Activated CD8-positive, alpha-beta T cell treated with anti-CD3 and anti-CD28 coated beads for 36 hours (primary cell): ENCODE measurements at regions of chr2 and their contacts with region 1.

Region 1: GRCh38 chr2:152717228-152718075 is at the start of gene PRPF40A:
- DNase-seq: peak; percentile 99
- ATAC-seq: peak; percentile 83
- H3K4me3 Mint-ChIP-seq: peak within 1 kb of the TSS; percentile 100
- H3K27ac Mint-ChIP-seq: peak within 1 kb of the TSS; percentile 99
- H3K4me1 Mint-ChIP-seq: peaks cover 49% of the 10 kb centered on the region
- H3K27me3 Mint-ChIP-seq: no peaks in the 10 kb centered on the region
- CTCF ChIP-seq: no peak
- total RNA-seq, gene PRPF40A: 145 to 148 TPM

Region 2: GRCh38 chr2:152694161-152694661 is 23.2 kb before region 1 on chr2:
- CTCF ChIA-PET with region 1: interaction called, 12 read pairs
- POLR2A ChIA-PET with region 1: interaction called, 12 read pairs
- intact Hi-C with region 1: no loop called
- DNase-seq: peak; percentile 74
- ATAC-seq: peak; percentile 88
- H3K4me3 Mint-ChIP-seq: peak overlapping the region; percentile 66
- H3K27ac Mint-ChIP-seq: peak overlapping the region; percentile 88
- H3K4me1 Mint-ChIP-seq: peaks cover 38% of the 10 kb centered on the region
- H3K27me3 Mint-ChIP-seq: no peaks in the 10 kb centered on the region
- CTCF ChIP-seq: no peak

Region 3: DNA sequence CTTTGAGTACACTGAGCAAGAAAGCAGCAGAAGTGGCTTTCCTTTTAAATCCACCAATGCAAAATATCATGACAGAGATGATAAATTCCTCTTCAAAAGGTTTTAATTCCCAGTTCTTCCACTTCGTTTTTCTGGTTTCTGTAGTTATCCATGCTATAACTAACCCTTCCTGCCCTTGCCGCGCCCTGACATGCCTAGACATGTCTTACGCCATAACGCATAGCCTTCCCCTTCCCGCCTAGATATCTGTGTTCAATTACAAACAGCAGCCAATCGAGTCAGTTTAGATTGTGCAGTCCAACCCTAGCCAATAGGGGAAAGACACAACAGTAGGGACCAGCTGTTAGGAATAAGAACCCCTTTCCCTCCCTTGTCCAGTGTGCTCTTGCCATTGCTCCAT is 16.3 kb before region 1 on chr2:
- CTCF ChIA-PET with region 1: interaction called, 20 read pairs
- POLR2A ChIA-PET with region 1: interaction called, 48 read pairs
- intact Hi-C with region 1: no loop called
- DNase-seq: no peak
- ATAC-seq: no peak
- H3K4me3 Mint-ChIP-seq: no peak overlapping the region
- H3K27ac Mint-ChIP-seq: peak overlapping the region; percentile 5
- H3K4me1 Mint-ChIP-seq: peaks cover 59% of the 10 kb centered on the region
- H3K27me3 Mint-ChIP-seq: no peaks in the 10 kb centered on the region
- CTCF ChIP-seq: no peak

Region 4: GRCh38 chr2:152730591-152731303 is 13.3 kb after region 1 on chr2:
- CTCF ChIA-PET with region 1: interaction called, 4 read pairs
- POLR2A ChIA-PET with region 1: interaction called, 11 read pairs
- intact Hi-C with region 1: no loop called
- DNase-seq: peak; percentile 50
- ATAC-seq: peak; percentile 86
- H3K4me3 Mint-ChIP-seq: no peak overlapping the region
- H3K27ac Mint-ChIP-seq: no peak overlapping the region
- H3K4me1 Mint-ChIP-seq: peaks cover 22% of the 10 kb centered on the region
- H3K27me3 Mint-ChIP-seq: no peaks in the 10 kb centered on the region
- CTCF ChIP-seq: no peak

Region 5: DNA sequence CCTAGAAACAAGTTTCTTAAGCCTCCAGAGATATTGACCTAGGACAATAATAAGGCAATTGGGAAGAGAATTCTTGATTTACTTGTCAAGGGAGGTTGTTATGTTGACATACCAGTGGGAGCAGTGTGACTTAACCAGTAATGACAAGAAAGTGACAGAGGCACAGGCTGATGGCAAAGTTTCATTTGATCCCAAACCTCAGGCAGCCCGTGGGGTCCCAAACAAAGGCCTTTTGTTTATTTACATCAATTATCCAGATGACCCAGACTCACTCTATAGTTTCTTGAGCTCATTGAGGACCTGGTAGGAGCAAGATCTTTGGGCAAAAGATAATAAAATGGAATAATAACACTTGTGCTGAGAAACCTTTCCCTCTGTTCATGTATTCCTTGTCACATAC is 337.7 kb after region 1 on chr2:
- CTCF ChIA-PET with region 1: no interaction called
- POLR2A ChIA-PET with region 1: no interaction called
- intact Hi-C with region 1: no loop called
- DNase-seq: no peak
- ATAC-seq: no peak
- H3K4me3 Mint-ChIP-seq: no peak overlapping the region
- H3K27ac Mint-ChIP-seq: no peak overlapping the region
- H3K4me1 Mint-ChIP-seq: no peaks in the 10 kb centered on the region
- H3K27me3 Mint-ChIP-seq: no peaks in the 10 kb centered on the region
- CTCF ChIP-seq: no peak